ENCODE measurements at regions of chr11 and their contacts with region 1.

Region 1: DNA sequence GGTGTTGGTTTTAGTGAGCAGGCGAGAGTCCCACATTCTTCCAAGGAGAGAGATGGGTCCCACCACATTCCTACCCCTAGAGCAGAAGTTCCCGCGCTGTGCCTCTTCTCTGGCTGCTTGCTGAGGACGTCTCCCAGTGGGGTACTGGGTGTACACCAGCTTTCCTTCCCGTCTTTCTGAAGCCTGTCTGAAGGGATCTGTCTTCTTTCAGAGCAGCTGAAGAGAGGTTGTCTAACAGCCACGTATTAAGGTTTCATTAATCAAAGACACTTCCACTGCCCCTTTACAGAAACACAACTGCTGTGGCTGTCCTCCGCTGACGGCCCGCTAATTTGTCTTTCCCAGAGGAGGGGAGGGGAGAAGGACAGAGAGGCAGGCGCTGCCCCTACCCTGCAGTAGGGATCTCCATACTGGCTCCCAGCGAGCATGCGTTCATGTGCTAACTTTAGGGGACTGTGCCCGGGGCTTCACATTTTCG is 56.0 kb downstream of the ZBTB16 start:
- DNase-seq: peak; percentile 60
- H3K4me3 ChIP-seq: no peak overlapping the region
- H3K27ac ChIP-seq: no peak overlapping the region
- H3K4me1 ChIP-seq: peaks cover 0 to 87% (median 62%) of the 10 kb centered on the region in 4 donors
- H3K27me3 ChIP-seq: no peaks in the 10 kb centered on the region
- CTCF ChIP-seq: peak in 1 of 4 experiments; percentile 9
- EP300 ChIP-seq: no peak
- POLR2A ChIP-seq: no peak

Region 2: GRCh38 chr11:113991170-113991569 is 124.3 kb before region 1 on chr11:
- intact Hi-C with region 1: no loop called
- DNase-seq: no peak
- H3K4me3 ChIP-seq: no peak overlapping the region
- H3K27ac ChIP-seq: no peak overlapping the region
- H3K4me1 ChIP-seq: no peaks in the 10 kb centered on the region
- H3K27me3 ChIP-seq: peaks cover 0 to 25% (median 0%) of the 10 kb centered on the region in 3 donors
- CTCF ChIP-seq: no peak
- EP300 ChIP-seq: no peak
- POLR2A ChIP-seq: no peak

Region 3: GRCh38 chr11:114001416-114001815 is 114.1 kb before region 1 on chr11:
- intact Hi-C with region 1: no loop called
- DNase-seq: peak; percentile 82
- H3K4me3 ChIP-seq: no peak overlapping the region
- H3K27ac ChIP-seq: no peak overlapping the region
- H3K4me1 ChIP-seq: peaks cover 0 to 15% (median 6%) of the 10 kb centered on the region in 4 donors
- H3K27me3 ChIP-seq: peaks cover 0 to 7% (median 0%) of the 10 kb centered on the region in 3 donors
- CTCF ChIP-seq: no peak
- EP300 ChIP-seq: peak; percentile 11 to 55 (median 49)
- POLR2A ChIP-seq: no peak

Region 4: DNA sequence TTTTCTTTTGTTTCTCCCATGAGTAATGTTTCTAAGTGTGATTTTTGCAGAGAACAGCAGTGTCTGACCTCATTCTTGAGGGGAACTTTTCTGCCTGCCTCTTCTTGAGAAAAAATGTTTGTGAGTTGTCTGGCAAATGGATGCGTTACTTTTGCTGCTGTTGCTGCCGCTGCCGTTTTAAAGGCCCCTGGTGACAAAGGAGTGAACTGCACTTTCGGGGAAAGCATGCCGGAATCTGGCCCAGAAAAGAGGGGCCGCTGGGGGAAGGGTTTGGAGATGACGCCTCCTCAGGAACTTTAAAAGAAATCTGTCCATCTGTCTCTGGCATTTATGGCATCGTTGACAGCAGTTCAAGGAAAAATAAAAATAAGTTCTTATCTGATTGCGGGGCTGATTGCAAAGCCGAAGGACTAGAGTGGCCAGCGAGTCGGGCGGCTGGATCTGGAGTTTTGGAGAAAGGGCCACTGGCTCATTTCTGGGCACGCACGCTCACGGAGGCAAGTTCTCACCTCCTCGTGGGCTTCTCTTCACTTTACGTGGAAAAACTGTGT is 39.5 kb before region 1 on chr11:
- intact Hi-C with region 1: loop called (anchors 5 kb)
- DNase-seq: peak; percentile 77
- H3K4me3 ChIP-seq: peak overlapping the region; percentile 1 to 22 (median 6)
- H3K27ac ChIP-seq: peak overlapping the region; percentile 16 to 80 (median 27)
- H3K4me1 ChIP-seq: peaks cover 0 to 100% (median 100%) of the 10 kb centered on the region in 4 donors
- H3K27me3 ChIP-seq: no peaks in the 10 kb centered on the region
- CTCF ChIP-seq: peak; percentile 40 to 60 (median 56)
- EP300 ChIP-seq: no peak
- POLR2A ChIP-seq: no peak